HCT116 (cell line): ENCODE measurements at regions of chr12 and their contacts with region 1.

Region 1: DNA sequence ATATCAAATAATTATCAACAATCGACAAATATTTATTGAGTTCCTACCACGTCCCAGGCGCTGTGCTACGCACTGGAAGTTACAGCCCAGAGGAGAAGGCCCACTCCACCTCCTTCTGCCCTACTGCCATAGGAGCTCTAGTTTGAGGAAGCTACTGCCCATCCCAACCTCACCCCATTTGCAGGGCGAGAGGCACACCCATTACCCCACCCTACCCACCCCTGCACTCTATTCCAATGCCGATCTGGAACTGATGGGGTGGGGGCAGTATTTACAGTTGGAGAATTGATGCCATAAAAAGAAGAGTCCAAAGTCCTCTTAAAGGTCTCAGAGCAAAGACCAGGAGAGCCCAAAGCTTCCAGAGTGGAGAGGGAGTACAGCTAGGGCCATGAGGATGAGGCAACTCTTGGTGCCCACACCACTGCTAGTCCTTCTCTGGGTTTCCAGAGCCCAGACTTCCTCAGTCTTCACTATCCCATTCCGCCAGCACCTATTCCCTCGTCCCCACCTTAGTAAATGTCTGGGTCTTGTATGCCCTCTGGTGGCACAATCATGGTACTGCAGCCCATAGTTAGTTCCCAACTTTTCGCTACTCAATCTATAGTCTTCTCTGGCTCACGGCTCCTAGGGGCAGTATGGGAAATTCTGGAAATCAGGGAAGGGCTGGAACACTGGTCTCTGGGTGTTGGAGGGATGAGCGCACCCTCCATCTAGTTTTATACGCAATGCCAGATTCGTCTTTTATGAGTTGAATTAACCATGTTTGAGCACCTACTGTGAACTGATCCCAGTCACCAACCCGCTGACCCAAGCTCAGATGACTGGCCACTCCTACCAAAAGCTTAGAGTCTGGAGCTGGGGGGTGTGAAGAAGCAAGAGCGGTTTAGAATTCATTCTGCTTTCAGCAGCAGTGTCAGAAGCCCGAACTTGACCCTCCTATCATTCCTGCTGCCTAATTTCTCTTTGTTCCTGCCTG is 6.9 kb upstream of the ADCY6 start:
- DNase-seq: peak; percentile 77
- ATAC-seq: peak; percentile 94
- H3K4me3 ChIP-seq: no peak overlapping the region
- H3K27ac ChIP-seq: no peak overlapping the region
- H3K4me1 ChIP-seq: peaks cover 8 to 15% of the 10 kb centered on the region in 2 experiments
- H3K27me3 ChIP-seq: no peaks in the 10 kb centered on the region
- CTCF ChIP-seq: peak; percentile 92 to 96 (median 96)
- POLR2A ChIP-seq: no peak
- RAD21 ChIP-seq: peak; percentile 98

Region 2: DNA sequence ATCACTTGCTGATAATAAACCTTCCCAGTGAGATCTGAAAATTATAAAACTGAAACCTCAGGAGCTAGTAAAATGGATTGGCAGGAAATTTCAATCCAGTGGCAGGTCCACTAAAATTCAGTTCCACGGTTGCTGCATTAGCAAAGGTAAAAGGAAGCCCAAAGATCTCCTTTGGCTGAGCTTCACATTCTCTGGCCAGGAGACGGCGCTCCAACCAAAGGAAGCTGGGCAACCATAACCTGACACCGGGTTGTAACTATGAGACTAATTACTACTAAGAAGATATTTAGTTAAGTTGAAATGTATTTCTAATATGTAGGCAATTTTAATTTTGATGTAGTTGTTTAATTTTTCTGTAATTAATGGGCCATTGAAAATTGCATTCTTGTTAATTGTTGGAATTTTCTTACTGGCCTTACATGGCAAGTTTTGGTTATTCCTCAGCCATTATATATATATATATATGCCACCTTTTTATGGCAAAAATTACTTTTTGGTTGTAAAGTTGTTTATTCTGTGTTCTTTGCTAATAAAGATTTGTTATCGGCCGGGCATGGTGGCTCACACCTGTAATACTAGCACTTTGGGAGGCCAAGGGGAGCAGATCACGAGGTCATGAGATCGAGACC is 253.4 kb before region 1 on chr12:
- CTCF ChIA-PET with region 1: interaction called, 9 read pairs
- POLR2A ChIA-PET with region 1: interaction called, 3 read pairs
- RAD21 ChIA-PET with region 1: no interaction called
- intact Hi-C with region 1: loop called (anchors 1 kb)
- DNase-seq: peak; percentile 23
- ATAC-seq: peak; percentile 79
- H3K4me3 ChIP-seq: no peak overlapping the region
- H3K27ac ChIP-seq: no peak overlapping the region
- H3K4me1 ChIP-seq: peaks cover 4 to 10% of the 10 kb centered on the region in 2 experiments; a peak in 3 of 4 replicates
- H3K27me3 ChIP-seq: no peaks in the 10 kb centered on the region
- CTCF ChIP-seq: peak; percentile 68 to 73 (median 69); a peak in 5 of 6 replicates
- POLR2A ChIP-seq: no peak
- RAD21 ChIP-seq: peak; percentile 87

Region 3: DNA sequence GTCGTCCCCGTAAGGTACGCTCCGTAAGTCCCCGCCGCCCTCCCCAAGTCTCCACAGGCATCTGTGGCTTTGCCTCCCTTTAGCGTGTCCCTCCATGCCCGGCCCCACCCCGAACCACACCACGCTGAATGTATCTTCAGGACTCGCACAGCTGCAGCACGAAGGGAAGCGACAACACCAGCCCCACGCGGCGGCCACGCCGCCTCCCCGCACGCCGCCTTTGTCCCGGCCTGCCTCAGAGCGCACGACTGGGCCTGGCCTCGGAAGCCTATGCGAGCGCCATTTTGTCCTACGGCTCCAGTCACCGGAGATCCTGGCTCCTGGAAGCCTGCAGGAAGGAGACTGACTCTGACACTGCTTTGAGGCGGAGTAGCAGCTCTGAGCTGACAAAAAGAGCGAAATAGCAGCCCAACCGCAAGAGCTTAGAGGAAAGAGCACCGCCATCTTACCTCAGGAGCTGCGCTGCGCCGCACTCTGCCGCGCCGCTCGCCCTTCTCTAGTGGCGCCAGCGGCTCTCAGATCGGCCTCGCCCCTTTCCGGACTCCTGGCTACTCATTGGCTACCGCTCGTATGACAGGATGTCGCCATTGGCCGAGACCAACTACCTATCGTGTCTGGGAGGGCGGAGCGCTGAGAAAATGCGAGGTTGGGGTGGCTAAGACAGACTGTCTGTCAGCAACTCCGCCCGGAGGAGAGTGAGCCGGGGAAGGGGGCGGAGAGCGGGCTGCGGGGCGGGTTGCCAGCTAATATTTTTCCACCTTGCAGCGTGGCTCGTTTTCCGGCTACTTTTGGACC is 113.8 kb before region 1 on chr12 and contains the start of gene KANSL2:
- CTCF ChIA-PET with region 1: interaction called, 3 read pairs
- POLR2A ChIA-PET with region 1: no interaction called
- RAD21 ChIA-PET with region 1: interaction called in 1 of 2 experiments, 3 read pairs
- intact Hi-C with region 1: loop called (anchors 5 kb)
- DNase-seq: peak; percentile 95
- ATAC-seq: peak; percentile 98
- H3K4me3 ChIP-seq: peak within 1 kb of the TSS; percentile 98 to 99
- H3K27ac ChIP-seq: peak within 1 kb of the TSS; percentile 82
- H3K4me1 ChIP-seq: peaks cover 7 to 22% of the 10 kb centered on the region in 2 experiments
- H3K27me3 ChIP-seq: no peaks in the 10 kb centered on the region
- CTCF ChIP-seq: no peak
- POLR2A ChIP-seq: peak; percentile 93
- RAD21 ChIP-seq: no peak
- total RNA-seq, gene KANSL2: 41.6 TPM

Region 4: DNA sequence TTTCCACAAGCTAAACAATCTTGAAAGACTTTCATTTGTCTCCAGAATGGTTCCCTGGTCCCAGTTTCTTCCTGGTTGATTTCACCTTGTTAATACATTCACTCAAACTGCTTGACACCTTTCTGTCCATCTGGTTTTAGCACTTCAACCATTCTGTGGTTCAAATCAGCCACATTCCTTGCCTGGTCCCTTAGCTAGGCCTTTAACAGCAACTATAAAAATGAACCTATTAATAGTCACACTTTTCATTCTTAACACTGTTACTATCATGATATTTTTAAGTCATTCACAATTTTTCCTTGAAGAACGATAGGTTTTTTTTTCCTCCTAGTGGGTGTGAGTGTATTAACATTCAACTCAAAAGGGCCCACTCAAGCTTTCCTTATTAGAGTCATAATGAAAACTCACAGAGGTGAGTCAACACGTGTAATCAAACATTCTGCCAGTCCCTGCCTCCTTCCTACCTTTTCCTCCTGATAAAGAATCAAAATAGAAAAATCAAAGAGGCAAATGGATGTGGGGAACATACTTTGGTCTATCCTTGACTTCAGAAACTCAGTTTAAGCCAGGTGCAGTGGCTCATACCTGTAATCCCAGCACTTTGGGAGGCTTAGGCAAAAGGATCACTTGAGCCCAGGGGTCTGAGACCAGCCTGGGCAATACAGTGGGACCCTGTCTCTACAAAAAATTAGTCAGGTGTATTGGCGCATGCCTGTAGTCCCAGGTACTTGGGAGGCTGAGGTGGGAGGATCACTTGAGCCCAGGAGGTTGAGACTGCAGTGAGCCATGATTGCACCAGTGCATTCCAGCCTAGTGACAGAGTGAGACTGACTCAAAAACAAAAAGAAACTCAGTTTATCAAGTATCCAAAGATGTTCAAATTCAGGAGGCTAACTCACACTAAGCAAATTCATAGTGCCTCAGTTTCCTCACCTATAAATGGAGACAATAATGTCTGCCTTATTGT is 44.7 kb before region 1 on chr12:
- CTCF ChIA-PET with region 1: interaction called, 85 read pairs
- POLR2A ChIA-PET with region 1: interaction called, 12 read pairs
- RAD21 ChIA-PET with region 1: interaction called, 10 to 21 read pairs
- intact Hi-C with region 1: loop called (anchors 1 kb)
- DNase-seq: no peak
- ATAC-seq: no peak
- H3K4me3 ChIP-seq: no peak overlapping the region
- H3K27ac ChIP-seq: no peak overlapping the region
- H3K4me1 ChIP-seq: no peaks in the 10 kb centered on the region
- H3K27me3 ChIP-seq: no peaks in the 10 kb centered on the region
- CTCF ChIP-seq: no peak
- POLR2A ChIP-seq: no peak
- RAD21 ChIP-seq: no peak

Region 5: DNA sequence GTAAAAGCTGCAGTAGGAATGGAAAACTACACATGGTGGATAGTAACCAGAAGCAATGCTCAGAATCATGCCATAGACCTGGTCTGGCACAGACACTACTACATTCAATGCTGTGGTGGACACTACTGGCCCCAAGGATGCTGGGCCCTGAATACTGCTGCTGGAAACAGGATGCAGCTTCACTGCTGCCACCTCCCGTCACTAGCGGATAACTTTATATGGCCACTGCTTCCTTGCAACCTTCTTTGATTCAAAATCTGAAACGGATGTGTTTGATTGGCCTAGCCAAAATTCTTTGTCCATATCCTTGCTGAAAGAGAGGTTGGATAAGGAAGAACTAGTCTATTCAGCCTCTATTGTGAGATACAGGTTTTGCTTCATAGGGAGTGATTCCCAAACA is 37.5 kb before region 1 on chr12:
- CTCF ChIA-PET with region 1: interaction called, 85 read pairs
- POLR2A ChIA-PET with region 1: interaction called, 12 read pairs
- RAD21 ChIA-PET with region 1: interaction called, 10 to 21 read pairs
- intact Hi-C with region 1: loop called (anchors 1 kb)
- DNase-seq: no peak
- ATAC-seq: peak; percentile 57
- H3K4me3 ChIP-seq: no peak overlapping the region
- H3K27ac ChIP-seq: no peak overlapping the region
- H3K4me1 ChIP-seq: no peaks in the 10 kb centered on the region
- H3K27me3 ChIP-seq: no peaks in the 10 kb centered on the region
- CTCF ChIP-seq: peak in 1 of 3 experiments; percentile 8; a peak in 1 of 6 replicates
- POLR2A ChIP-seq: no peak
- RAD21 ChIP-seq: no peak

Region 6: GRCh38 chr12:48965298-48965838 is 169.6 kb after region 1 on chr12:
- CTCF ChIA-PET with region 1: no interaction called
- POLR2A ChIA-PET with region 1: no interaction called
- RAD21 ChIA-PET with region 1: no interaction called
- intact Hi-C with region 1: no loop called
- DNase-seq: no peak
- ATAC-seq: peak; percentile 81
- H3K4me3 ChIP-seq: no peak overlapping the region
- H3K27ac ChIP-seq: no peak overlapping the region
- H3K4me1 ChIP-seq: peaks cover 0 to 8% of the 10 kb centered on the region in 2 experiments; a peak in 2 of 4 replicates
- H3K27me3 ChIP-seq: no peaks in the 10 kb centered on the region
- CTCF ChIP-seq: peak in 2 of 3 experiments; percentile 40; a peak in 3 of 6 replicates
- POLR2A ChIP-seq: no peak
- RAD21 ChIP-seq: no peak

Region 7: DNA sequence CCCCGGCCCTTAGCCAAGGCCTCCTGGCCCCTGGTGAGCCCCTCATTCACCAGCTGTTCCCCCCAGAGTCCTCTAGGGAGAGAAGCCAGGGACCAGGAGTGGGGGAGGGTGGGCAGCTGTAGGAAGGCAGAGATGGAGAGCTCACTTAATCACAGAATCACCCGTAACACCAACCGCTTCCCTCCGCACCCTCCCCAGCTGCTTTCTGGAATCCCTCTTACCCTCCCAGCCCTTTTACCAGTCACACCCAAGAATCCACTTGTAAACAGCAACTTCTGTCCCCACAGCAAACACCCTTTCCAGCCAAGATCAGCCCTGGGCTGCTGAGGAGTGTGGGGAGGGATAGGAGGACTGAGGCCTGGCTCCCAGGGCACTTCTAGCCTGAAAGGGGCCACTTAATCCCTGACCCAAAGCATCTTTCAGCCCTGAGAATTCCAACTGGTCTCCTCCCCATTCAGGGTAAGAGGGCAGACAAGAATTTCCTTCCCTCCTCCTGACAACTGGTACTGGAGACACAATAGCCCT is 1013.7 kb after region 1 on chr12:
- CTCF ChIA-PET with region 1: no interaction called
- POLR2A ChIA-PET with region 1: no interaction called
- RAD21 ChIA-PET with region 1: no interaction called
- intact Hi-C with region 1: no loop called
- DNase-seq: no peak
- ATAC-seq: no peak
- H3K4me3 ChIP-seq: no peak overlapping the region
- H3K27ac ChIP-seq: no peak overlapping the region
- H3K4me1 ChIP-seq: no peaks in the 10 kb centered on the region
- H3K27me3 ChIP-seq: no peaks in the 10 kb centered on the region
- CTCF ChIP-seq: no peak
- POLR2A ChIP-seq: no peak
- RAD21 ChIP-seq: no peak